ENCODE measurements at regions of chr5 and their contacts with region 1.

Region 1: GRCh38 chr5:40755407-40756365 is at the start of gene TTC33:
- ATAC-seq: peak; percentile 88 to 96 (median 96)
- H3K4me3 ChIP-seq: peak within 1 kb of the TSS; percentile 81 to 91 (median 87)
- H3K27ac ChIP-seq: peak within 1 kb of the TSS; percentile 76 to 83
- H3K4me1 ChIP-seq: peaks cover 7 to 12% of the 10 kb centered on the region in 2 donors
- total RNA-seq, gene TTC33: 6.8 to 25.5 (median 16.5) TPM

Region 2: DNA sequence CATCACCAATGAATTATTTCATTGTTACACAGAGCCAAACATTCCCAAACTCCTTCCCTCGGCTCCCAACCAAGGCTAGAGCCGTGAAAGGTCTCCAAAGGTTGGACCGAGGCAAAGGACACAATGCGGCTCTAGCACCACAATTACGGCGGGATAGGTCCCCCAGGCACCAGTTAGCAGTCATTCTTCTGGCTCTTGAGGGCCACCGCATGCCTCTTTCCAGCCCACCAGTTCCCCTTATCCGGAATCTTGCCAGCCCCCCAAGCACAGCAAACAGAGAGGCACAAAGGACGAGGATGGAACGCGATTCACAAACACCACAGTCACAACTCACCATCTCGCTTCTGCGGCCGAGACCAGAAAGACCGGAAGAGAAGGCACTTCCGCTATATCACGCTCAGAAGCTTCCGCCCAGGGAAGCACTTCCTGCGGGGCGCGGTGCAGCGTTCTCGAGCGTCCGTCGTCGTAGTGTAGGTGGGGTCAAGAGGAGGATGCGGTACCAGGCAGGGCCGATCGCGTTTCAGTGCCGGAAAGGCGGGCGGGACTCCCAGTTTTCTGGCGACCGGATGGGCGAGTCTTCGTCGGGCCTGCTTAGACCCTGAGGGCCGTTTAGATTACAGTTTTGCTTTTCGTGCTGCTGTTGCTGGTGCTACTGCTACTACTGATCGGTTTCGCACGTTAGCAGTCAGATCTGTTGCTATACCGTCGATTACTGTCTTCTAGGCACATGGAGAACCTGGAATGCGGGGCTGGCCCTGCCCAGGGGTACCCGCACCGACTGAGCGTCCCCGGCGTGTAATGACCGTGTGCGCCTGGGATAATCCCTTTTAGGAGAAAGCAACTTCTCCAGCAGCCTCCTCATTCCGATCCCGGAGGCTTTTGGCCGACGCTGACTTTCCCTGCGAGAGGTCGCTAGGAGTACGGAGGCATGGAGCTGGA is 79.4 kb after region 1 on chr5 and contains the start of gene RPL37:
- in situ Hi-C with region 1: loop called in 1 of 9 experiments (anchors 10 kb)
- ATAC-seq: peak; percentile 89 to 100 (median 99)
- H3K4me3 ChIP-seq: peak within 1 kb of the TSS; percentile 45 to 80 (median 67)
- H3K27ac ChIP-seq: peak within 1 kb of the TSS; percentile 88 to 94
- H3K4me1 ChIP-seq: peaks cover 5 to 18% of the 10 kb centered on the region in 2 donors
- total RNA-seq, gene RPL37: 2,125 to 3,124 (median 2,435) TPM

Measured in motor neuron (in vitro differentiated cells).